HEK293 (cell line): ENCODE measurements at regions of chr2 and their contacts with region 1.

Region 1: GRCh38 chr2:147045113-147045512 is 799.7 kb upstream of the ACVR2A start:
- H3K4me3 ChIP-seq: no peak overlapping the region
- H3K27ac ChIP-seq: no peak overlapping the region
- H3K4me1 ChIP-seq: no peaks in the 10 kb centered on the region
- CTCF ChIP-seq: 0 out of 2 replicates have a peak, but pooled peaks have one; percentile 27

Region 2: DNA sequence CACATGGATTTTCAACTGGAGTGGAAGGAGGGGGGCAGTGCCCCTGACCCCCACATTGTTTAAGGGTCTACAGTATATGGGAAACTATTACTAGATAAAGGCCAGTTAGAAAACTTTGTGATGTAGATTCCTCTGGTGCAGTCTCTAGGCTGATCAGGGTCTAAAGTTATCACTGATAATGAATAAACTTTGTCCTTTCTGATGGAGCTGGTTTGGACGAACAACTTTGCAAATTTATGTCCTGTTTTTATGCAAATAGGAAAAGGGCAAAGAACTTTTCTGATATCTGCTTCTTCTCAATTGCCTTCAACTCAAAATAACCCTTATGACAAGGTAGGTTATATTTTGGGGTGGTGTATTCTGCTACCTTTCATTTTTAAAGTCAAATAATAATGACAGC is 29.5 kb before region 1 on chr2:
- CTCF ChIA-PET with region 1: no interaction called
- POLR2A ChIA-PET with region 1: no interaction called
- H3K4me3 ChIP-seq: no peak overlapping the region
- H3K27ac ChIP-seq: no peak overlapping the region
- H3K4me1 ChIP-seq: no peaks in the 10 kb centered on the region
- CTCF ChIP-seq: no peak

Region 3: DNA sequence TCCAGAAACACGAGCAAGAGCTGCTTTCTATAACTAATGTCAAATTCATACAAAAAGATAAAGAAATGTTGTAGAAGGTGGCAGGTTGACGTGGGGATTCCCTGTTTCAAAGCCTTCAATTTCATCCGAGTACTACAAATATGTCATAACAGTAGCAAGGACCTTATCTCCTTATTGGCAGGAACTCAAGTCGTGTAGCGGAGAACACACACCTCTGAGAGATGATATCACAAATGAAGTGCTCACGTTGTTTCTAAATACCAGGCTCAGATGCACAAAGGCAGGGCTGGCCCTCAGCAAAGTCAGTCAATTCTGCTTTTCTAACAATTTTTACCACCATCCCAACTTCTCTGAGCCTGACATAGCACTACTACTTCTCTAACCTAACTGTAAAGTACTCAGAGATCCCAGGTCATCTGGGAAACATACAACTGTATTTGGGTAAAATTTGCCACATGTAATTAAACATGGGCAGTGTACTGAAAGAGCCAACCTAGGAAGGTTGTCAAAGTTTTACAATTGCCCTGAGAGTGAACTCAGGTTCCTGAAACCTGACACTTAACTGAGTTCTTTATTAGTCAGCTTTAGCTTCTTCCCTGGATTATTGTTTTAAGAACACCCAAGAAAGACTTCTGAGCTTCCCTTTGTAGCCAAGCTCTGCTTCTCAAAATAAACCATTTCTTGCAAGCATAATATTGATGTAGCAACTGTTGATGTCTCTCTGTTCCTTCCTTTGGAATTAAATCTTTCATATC is 14.0 kb before region 1 on chr2:
- CTCF ChIA-PET with region 1: interaction called, 11 read pairs
- POLR2A ChIA-PET with region 1: interaction called, 3 read pairs
- H3K4me3 ChIP-seq: no peak overlapping the region
- H3K27ac ChIP-seq: no peak overlapping the region
- H3K4me1 ChIP-seq: peaks cover 18% of the 10 kb centered on the region
- CTCF ChIP-seq: no peak

Region 4: DNA sequence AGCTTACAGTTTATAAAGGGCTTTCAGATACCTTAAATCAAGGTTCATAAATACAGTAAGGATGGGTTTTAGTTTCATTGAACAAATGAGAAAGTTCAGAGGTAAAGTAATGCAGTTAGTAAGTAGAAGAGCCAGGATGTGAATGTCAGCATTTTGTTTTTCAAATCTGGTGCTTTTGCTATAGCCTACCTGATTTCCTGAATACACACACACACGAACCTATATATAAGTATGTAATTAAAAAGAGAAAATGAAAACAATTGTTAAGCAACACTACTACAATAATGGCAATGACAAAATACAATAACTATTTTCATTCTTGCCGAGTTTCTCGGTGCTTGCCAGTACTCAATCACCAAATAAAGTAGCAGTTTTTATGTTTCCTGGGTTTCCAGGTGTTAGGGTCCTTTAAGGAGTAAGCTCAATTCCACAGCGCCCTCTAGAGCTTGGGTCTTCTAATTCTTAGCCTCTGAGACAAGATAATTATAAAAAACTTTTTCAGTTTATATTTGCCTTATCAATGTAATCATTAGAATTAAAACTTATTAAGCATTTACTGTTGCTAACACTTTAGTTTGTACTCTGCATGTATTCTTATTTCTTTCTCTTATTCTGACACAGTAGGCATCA is 286.8 kb after region 1 on chr2:
- CTCF ChIA-PET with region 1: interaction called, 15 read pairs
- POLR2A ChIA-PET with region 1: no interaction called
- H3K4me3 ChIP-seq: no peak overlapping the region
- H3K27ac ChIP-seq: no peak overlapping the region
- H3K4me1 ChIP-seq: no peaks in the 10 kb centered on the region
- CTCF ChIP-seq: no peak

Region 5: GRCh38 chr2:147910990-147911473 is 865.9 kb after region 1 on chr2:
- CTCF ChIA-PET with region 1: interaction called, 15 read pairs
- POLR2A ChIA-PET with region 1: no interaction called
- H3K4me3 ChIP-seq: no peak overlapping the region
- H3K27ac ChIP-seq: no peak overlapping the region
- H3K4me1 ChIP-seq: peaks cover 16% of the 10 kb centered on the region
- CTCF ChIP-seq: peak; percentile 32; the same call in 1 of the 2 replicates